Adrenal gland (tissue), 19 donors: ENCODE measurements at regions of chr18 and their contacts with region 1.

Region 1: GRCh38 chr18:22563098-22563707 is 145.5 kb upstream of the CTAGE1 start:
- DNase-seq: peak; percentile 56 to 76 (median 61)
- H3K4me3 ChIP-seq: peak overlapping the region in 1 of 4 donors; percentile 17
- H3K27ac ChIP-seq: peak overlapping the region in 3 of 5 donors; percentile 4 to 36 (median 26)
- H3K4me1 ChIP-seq: peaks cover 9 to 22% of the 10 kb centered on the region in 2 donors
- H3K27me3 ChIP-seq: no peaks in the 10 kb centered on the region
- CTCF ChIP-seq: peak; percentile 52 to 93 (median 86)
- POLR2A ChIP-seq: no peak

Region 2: GRCh38 chr18:21897811-21898210 is 665.4 kb before region 1 on chr18:
- intact Hi-C with region 1: loop called in 1 of 2 experiments (anchors 5 kb)
- DNase-seq: peak; percentile 43 to 75 (median 55)
- H3K4me3 ChIP-seq: no peak overlapping the region
- H3K27ac ChIP-seq: no peak overlapping the region
- H3K4me1 ChIP-seq: no peaks in the 10 kb centered on the region
- H3K27me3 ChIP-seq: no peaks in the 10 kb centered on the region
- CTCF ChIP-seq: peak; percentile 63 to 76 (median 74)
- POLR2A ChIP-seq: no peak

Region 3: DNA sequence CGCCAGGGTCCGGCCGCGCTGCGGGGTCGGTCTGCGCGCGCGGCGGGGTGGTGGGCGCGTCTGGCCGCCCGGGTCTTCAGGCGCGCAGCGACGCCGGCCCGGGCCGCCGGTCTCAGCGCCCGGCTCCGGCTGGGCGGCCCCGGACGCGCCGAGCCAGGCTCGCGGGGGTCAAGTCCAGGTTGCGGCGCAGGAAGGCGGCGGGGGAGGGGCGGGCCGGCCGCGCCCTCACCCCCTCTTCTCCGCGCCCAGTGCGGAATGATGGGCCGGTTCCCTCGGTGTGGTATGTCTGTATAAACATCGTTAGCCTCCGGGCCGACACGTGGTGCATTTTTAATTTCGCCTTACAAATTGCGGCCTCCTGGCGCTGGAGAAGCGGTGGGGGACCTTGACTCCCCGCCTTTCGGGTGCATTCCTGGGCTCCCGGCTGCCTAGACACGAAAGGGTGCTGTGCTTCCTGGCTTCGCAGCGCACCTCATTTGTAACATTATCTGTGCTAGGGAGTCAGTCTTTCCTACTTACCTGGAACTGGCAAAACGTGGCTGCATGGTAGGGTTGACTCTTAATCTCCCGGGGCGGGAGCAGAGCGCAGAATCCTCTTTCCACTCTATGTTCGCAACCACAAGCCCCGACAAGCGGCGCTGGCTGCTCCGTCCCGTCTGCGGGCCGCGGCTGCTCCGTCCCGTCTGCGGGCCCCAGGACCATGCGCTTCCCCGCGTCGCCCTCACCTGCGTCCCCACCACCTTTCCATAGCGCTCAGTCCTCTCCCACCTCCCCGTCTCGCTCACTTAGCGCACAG is 214.5 kb before region 1 on chr18:
- intact Hi-C with region 1: loop called in 1 of 2 experiments (anchors 5 kb)
- DNase-seq: peak; percentile 66 to 90 (median 79)
- H3K4me3 ChIP-seq: peak overlapping the region in 2 of 4 donors; percentile 36 to 62
- H3K27ac ChIP-seq: peak overlapping the region; percentile 78 to 96 (median 93)
- H3K4me1 ChIP-seq: peaks cover 31 to 45% of the 10 kb centered on the region in 2 donors
- H3K27me3 ChIP-seq: no peaks in the 10 kb centered on the region
- CTCF ChIP-seq: no peak
- POLR2A ChIP-seq: peak; percentile 56 to 70

Region 4: GRCh38 chr18:22385718-22386117 is 177.5 kb before region 1 on chr18:
- intact Hi-C with region 1: loop called in 1 of 2 experiments (anchors 10 kb)
- DNase-seq: peak in 1 of 7 donors; percentile 32
- H3K4me3 ChIP-seq: no peak overlapping the region
- H3K27ac ChIP-seq: no peak overlapping the region
- H3K4me1 ChIP-seq: no peaks in the 10 kb centered on the region
- H3K27me3 ChIP-seq: no peaks in the 10 kb centered on the region
- CTCF ChIP-seq: no peak
- POLR2A ChIP-seq: no peak

Region 5: GRCh38 chr18:22494771-22495170 is 68.4 kb before region 1 on chr18:
- intact Hi-C with region 1: loop called in 1 of 2 experiments (anchors 10 kb)
- DNase-seq: no peak
- H3K4me3 ChIP-seq: no peak overlapping the region
- H3K27ac ChIP-seq: peak overlapping the region in 2 of 5 donors; percentile 19 to 57
- H3K4me1 ChIP-seq: peaks cover 0 to 8% of the 10 kb centered on the region in 2 donors
- H3K27me3 ChIP-seq: no peaks in the 10 kb centered on the region
- CTCF ChIP-seq: no peak
- POLR2A ChIP-seq: no peak